ENCODE measurements at regions of chr1 and their contacts with region 1.

Region 1: DNA sequence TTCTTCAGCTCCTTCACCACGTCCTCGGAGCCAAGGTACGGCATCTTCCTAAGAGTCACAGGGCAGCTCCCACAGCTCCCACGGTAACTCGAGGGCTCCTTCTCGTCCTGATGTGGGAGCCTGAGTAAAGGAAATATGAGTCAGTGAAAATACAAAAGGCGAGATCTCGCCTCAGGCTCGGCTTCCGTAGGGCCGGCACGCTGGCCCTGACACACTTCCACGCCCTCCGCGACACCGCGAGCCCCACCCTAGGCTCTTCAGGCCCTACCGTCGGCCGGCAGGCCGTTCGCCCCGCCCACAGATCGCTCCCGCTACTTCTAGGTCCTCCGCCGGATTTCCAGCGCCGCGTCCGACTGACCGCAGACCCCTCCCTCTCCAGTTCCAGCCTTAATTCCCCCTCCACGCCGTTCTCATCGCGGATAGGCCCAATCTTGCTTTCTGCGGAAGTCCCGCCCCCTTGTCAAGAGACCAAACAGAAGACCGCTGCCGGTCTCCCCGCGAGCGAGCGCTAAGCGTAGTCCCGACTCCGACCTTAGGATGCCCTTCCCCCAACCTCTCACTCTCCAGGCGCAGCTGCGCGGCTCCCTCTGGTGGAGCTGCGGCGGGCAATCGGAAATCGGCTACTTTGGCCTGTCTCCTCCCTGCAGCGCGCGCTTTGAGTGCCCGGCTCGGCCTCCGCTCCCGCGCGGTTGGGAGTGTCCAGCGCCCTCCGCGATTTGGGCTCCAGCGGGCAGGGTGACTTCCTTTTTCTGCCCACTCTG is at the starts of genes AP4B1 and DCLRE1B:
- DNase-seq: peak; percentile 99
- H3K4me3 Mint-ChIP-seq: peak within 1 kb of the TSS; percentile 95
- H3K27ac Mint-ChIP-seq: peak within 1 kb of the TSS; percentile 94
- H3K4me1 Mint-ChIP-seq: no peaks in the 10 kb centered on the region
- H3K27me3 Mint-ChIP-seq: no peaks in the 10 kb centered on the region
- CTCF ChIP-seq: peak; percentile 49
- total RNA-seq, gene AP4B1: 20.4 and 21.3 TPM in 2 replicates
- total RNA-seq, gene DCLRE1B: 6.9 and 8.1 TPM in 2 replicates

Region 2: DNA sequence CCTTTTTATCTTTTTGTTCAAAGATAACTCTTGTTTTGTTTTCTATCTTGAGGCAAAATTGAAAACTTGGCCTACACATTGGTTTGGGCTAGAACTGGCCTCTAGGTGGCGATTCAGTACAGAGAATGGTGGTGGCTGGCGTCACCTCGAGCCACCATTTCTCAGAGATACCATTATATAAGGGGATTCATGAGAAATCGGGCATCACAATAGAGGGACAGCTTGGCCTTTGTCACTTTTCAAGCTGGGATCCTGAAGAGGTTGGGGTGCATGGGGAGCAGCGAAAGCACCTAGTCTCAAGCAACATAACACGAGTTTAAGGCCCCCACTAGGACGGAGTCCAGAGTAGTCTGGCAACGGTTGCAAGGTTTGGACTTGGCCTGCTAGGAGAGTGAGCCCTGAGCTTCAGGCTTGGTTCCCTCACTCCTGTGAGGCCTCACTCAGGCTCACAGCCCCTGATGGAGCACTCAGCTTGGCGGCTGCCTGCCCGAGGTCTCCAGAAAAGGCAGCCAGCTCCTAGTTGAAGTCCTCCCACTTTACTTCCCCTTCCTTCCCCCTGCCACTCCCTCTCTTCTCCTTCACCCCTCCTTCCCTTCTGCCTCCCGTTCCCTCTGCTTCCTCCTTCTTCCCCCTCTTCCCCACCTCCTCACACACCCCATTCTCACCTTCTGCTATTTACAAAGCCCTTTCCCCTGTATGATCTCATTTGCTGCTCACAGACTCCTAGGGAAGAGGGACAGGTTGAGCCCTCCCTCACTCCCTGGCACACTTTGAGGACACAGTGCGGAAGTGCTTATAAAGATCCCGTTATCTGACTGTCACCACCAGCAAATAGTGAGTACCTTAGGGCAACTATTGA is 764.0 kb before region 1 on chr1:
- CTCF ChIA-PET with region 1: no interaction called
- POLR2A ChIA-PET with region 1: no interaction called
- intact Hi-C with region 1: loop called (anchors 2 kb)
- DNase-seq: peak; percentile 69
- H3K4me3 Mint-ChIP-seq: no peak overlapping the region
- H3K27ac Mint-ChIP-seq: no peak overlapping the region
- H3K4me1 Mint-ChIP-seq: peaks cover 20% of the 10 kb centered on the region
- H3K27me3 Mint-ChIP-seq: no peaks in the 10 kb centered on the region
- CTCF ChIP-seq: peak; percentile 84

Region 3: GRCh38 chr1:113593550-113594297 is 311.1 kb before region 1 on chr1:
- CTCF ChIA-PET with region 1: no interaction called
- POLR2A ChIA-PET with region 1: no interaction called
- intact Hi-C with region 1: no loop called
- DNase-seq: no peak
- H3K4me3 Mint-ChIP-seq: no peak overlapping the region
- H3K27ac Mint-ChIP-seq: no peak overlapping the region
- H3K4me1 Mint-ChIP-seq: no peaks in the 10 kb centered on the region
- H3K27me3 Mint-ChIP-seq: no peaks in the 10 kb centered on the region
- CTCF ChIP-seq: no peak

Region 4: GRCh38 chr1:113759333-113760101 is 145.3 kb before region 1 on chr1 and contains the start of gene PHTF1:
- CTCF ChIA-PET with region 1: interaction called, 3 read pairs
- POLR2A ChIA-PET with region 1: interaction called, 11 read pairs
- intact Hi-C with region 1: loop called (anchors 2 kb)
- DNase-seq: peak; percentile 69
- H3K4me3 Mint-ChIP-seq: peak within 1 kb of the TSS; percentile 73
- H3K27ac Mint-ChIP-seq: peak within 1 kb of the TSS; percentile 73
- H3K4me1 Mint-ChIP-seq: peaks cover 13% of the 10 kb centered on the region
- H3K27me3 Mint-ChIP-seq: no peaks in the 10 kb centered on the region
- CTCF ChIP-seq: no peak
- total RNA-seq, gene PHTF1: 8.4 and 13.0 TPM in 2 replicates

Region 5: DNA sequence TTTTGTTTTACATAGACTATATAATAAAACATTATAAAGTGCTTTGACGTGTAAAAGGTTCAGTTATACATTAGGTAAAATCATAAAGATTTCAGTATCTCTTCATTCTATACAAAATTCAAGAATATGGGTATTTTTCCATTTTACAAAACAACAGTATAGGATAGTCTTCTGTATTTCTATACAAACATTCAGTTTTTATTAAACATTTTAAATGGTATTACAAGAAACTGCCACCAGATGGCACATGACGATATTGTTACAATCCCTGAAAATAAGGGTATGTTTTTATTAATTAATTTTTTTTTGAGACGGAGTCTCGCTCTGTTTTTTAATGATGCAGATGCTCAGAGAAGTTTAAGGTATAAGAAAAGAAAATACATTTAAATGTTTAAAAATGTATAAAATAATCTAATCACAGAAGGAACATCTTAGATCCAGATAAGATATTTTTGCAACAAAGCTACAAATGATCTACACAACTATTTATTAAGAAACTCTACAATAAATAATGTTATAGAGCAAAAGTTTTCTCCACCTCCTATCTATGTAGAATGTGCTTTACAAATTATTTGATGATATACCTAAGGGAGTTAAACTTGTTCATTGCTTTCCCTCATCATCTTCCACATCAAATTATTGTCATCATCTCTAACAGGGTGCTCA is 69.1 kb before region 1 on chr1:
- CTCF ChIA-PET with region 1: interaction called, 27 read pairs
- POLR2A ChIA-PET with region 1: interaction called, 27 read pairs
- intact Hi-C with region 1: loop called (anchors 1 kb)
- DNase-seq: peak; percentile 72
- H3K4me3 Mint-ChIP-seq: no peak overlapping the region
- H3K27ac Mint-ChIP-seq: no peak overlapping the region
- H3K4me1 Mint-ChIP-seq: no peaks in the 10 kb centered on the region
- H3K27me3 Mint-ChIP-seq: no peaks in the 10 kb centered on the region
- CTCF ChIP-seq: peak; percentile 50

Region 6: GRCh38 chr1:113846391-113847035 is 58.3 kb before region 1 on chr1:
- CTCF ChIA-PET with region 1: no interaction called
- POLR2A ChIA-PET with region 1: no interaction called
- intact Hi-C with region 1: no loop called
- DNase-seq: no peak
- H3K4me3 Mint-ChIP-seq: no peak overlapping the region
- H3K27ac Mint-ChIP-seq: no peak overlapping the region
- H3K4me1 Mint-ChIP-seq: no peaks in the 10 kb centered on the region
- H3K27me3 Mint-ChIP-seq: no peaks in the 10 kb centered on the region
- CTCF ChIP-seq: no peak

Region 7: GRCh38 chr1:113928941-113929749 is 24.3 kb after region 1 on chr1 and contains the start of gene HIPK1:
- CTCF ChIA-PET with region 1: interaction called, 48 read pairs
- POLR2A ChIA-PET with region 1: interaction called, 228 read pairs
- intact Hi-C with region 1: loop called (anchors 1 kb)
- DNase-seq: peak; percentile 89
- H3K4me3 Mint-ChIP-seq: peak within 1 kb of the TSS; percentile 95
- H3K27ac Mint-ChIP-seq: peak within 1 kb of the TSS; percentile 97
- H3K4me1 Mint-ChIP-seq: peaks cover 47% of the 10 kb centered on the region
- H3K27me3 Mint-ChIP-seq: no peaks in the 10 kb centered on the region
- CTCF ChIP-seq: no peak
- total RNA-seq, gene HIPK1: 46.7 and 50.2 TPM in 2 replicates